HEK293T (cell line): ENCODE measurements at regions of chr4 and their contacts with region 1.

Region 1: DNA sequence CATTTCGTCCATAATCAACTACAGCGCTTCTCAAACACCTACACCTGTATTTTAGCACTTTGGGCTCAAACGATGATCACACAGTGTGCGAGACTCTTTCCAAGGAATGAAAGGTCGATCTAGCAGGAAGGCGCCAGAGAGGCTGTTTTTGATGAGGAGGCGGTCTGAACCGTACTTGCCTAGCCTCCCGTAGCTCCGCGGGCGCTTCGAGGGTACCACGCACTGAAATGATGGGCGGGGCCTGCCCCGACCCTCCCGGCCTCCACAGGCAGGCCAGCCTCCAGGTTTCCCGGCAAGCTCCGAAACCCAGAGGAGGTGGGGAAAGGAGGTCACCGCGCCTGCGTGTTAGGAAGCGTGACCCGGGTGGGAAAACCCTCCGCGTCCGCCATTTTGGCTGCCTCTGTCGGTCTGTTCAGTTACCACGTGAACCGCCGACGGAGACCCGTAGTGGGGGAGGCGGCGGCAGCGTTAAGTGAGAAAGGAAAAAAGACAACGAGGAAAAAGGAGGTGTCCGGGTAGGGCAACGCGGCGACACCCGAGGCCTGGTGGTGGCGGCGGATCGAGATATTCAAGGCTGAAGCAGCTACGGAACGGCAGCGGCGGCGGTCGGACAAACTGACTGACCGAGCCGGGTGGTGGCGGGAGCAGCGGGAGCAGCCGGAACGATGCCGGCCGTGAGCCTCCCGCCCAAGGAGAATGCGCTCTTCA is at the start of gene NAA15:
- DNase-seq: peak; percentile 93

Region 2: GRCh38 chr4:138507522-138507921 is 793.7 kb before region 1 on chr4:
- CTCF ChIA-PET with region 1: no interaction called
- POLR2A ChIA-PET with region 1: no interaction called
- DNase-seq: no peak

Region 3: DNA sequence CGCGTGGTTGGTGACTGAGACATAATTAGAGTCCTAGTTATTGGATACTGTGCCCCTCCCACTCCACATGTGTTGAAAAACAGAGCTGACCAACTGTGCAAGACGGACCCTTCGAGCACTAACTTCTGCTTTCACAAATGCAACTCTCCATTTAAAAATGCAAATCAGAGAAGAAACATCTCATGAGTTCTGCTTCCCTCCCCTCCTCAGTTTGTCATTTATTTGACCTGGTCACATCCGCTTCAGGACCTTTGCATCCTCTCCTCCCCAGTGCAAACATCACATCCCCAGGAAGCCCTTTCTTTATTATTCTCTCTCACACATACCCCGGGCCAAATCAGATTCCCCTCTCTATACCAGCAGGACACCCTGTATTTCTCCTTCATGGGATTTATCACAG is 323.7 kb before region 1 on chr4:
- CTCF ChIA-PET with region 1: no interaction called
- POLR2A ChIA-PET with region 1: no interaction called
- DNase-seq: no peak

Region 4: GRCh38 chr4:139177868-139178611 is 123.2 kb before region 1 on chr4:
- CTCF ChIA-PET with region 1: interaction called, 15 read pairs
- POLR2A ChIA-PET with region 1: interaction called, 50 read pairs
- DNase-seq: peak; percentile 88

Region 5: DNA sequence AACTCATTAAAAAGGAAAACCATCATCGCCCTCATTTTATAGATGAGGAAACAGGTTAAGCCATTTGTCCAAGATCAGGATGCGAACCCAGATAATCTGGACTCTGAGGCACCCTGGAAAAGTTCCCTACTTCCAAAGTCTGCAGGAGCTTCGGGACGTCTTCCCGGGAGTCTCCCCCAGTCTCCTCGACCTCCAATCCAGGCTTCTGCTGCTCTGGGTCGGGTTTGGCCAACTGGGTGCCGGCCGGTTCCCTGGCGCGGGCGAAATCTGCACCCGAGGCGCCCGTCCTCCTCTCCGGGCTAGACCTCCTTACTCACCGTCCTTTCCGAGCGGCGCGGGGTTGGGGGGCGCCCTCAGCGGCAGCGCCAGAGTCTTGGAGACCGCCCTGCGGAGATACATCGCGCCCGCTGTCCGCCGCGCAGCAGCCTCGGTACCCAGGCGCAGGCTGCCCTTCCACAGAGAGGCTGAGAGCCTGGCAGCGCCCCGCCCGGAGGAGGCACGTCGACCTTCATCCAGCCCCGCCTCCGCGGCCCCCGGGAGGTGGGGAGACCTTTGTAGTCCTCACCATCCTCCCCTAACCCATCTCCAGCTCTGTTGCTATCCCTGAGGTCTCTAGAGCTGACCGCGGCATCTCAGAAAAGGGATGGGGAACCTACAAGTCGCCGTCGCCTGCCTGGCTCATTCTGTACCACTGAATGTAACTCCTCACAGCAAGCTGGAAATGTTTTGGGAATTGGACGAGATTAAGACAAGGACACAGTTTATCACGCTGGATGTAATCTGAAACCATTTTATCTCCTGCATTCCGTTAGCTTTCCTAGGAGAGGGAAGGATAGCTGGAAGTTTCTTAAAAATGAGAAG is 21.3 kb before region 1 on chr4 and contains the start of gene MGARP:
- CTCF ChIA-PET with region 1: interaction called, 20 read pairs
- POLR2A ChIA-PET with region 1: interaction called, 17 read pairs
- DNase-seq: peak; percentile 48

Region 6: DNA sequence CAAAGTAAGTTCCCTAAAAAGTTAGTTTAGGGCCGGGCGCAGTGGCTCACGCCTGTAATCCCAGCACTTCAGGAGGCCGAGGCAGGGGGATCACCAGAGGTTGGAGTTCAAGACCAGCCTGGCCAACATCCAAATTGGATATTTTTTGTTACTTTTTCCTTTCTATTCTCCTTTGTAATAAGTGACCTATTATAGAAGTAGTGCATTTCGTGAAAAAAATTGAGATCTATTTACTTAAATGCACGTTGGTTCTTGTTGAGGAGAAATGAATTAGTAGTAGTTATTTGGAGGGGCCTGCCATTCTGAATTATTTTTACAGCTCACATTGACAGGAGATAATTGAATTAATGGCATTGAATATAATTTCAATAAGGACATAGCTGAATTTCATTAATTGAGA is 23.4 kb after region 1 on chr4:
- CTCF ChIA-PET with region 1: interaction called, 4 read pairs
- POLR2A ChIA-PET with region 1: interaction called, 24 read pairs
- DNase-seq: no peak

Region 7: DNA sequence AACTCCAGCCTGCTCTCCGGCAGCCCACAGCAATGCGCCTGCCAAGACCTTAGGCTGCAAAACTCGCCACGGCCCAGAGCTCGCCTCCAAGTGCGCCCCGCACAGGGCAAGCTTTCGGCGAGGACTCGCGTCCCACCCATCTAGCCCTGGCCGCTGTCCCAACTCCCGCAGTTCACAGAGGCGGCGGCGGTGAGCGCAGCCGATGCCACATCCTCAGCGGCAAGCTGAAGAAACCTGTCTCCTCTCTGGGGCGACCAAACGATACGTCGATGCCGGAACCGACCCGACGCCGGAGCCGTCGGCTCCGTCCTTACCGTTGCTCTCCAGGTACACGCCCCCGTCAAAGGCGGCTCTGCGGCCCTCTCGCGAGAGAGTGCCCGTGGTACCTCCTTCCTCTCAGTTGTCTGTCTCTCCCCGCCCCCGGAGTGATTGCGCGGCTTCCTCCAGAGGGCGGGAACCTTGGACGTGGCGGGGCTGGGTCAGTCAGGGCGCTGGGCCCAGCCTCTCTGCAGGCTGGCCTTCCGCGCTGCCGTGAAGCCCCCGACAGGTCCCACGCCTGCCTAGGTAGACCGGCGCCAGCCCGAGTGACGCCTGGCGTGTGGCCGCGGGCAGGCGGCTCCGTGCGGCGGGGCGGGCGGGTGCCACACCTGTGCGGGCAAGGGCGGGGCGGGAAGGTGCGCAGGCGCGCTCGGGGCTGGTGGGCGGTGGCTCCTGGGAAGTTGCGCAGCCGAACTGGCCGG is 152.3 kb after region 1 on chr4:
- CTCF ChIA-PET with region 1: no interaction called
- POLR2A ChIA-PET with region 1: interaction called, 11 read pairs
- DNase-seq: peak; percentile 90

Region 8: GRCh38 chr4:139530833-139531427 is 229.7 kb after region 1 on chr4:
- CTCF ChIA-PET with region 1: no interaction called
- POLR2A ChIA-PET with region 1: no interaction called
- DNase-seq: peak; percentile 79